CD8-positive, alpha-beta memory T cell (primary cell): ENCODE measurements at regions of chr16 and their contacts with region 1.

Region 1: DNA sequence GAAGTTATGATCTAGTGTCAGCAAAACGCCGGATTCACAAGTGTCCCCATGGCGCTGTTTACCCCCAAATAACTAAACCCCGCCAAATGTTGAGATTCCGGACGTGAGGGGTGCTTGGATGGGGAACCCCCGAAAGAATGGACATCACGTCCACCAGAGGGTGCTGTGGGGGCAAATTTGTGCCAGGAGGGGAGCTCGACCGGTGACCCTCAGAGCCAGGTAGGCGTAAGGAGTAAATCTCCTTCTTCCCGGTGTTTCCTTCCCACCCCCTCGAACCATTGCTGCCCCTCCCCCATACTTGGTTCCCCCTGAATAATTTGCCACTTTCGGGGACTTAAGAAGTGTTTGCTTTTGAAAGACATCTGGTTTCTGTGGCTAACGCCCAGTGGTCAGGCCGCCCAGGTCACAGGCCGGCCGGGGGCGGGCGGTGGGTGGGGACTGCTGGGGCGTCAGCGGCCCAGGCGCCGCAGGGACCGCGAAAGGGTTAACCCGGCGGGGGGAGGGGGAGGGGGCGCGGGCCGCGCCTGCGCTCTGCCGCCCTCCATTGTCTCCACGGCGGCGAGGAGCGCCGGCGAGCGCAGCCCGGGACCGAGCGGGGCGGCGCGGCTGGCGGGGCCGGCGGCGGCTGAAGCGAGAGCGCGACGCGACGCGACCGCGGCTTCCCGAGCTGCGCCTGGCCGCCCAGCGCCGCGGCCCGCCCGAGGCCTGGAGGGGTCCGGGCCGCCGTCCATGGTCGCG is at the start of gene ZNRF1:
- DNase-seq: peak; percentile 66 to 82 (median 71)
- H3K4me3 ChIP-seq: peak within 1 kb of the TSS; percentile 28
- H3K4me3 Mint-ChIP-seq: peak within 1 kb of the TSS; percentile 87 to 94 (median 89)
- H3K27ac ChIP-seq: no peak within 1 kb of the TSS
- H3K27ac Mint-ChIP-seq: peak within 1 kb of the TSS; percentile 59 to 91 (median 85)
- H3K4me1 ChIP-seq: peaks cover 15% of the 10 kb centered on the region
- H3K4me1 Mint-ChIP-seq: peaks cover 14 to 19% (median 17%) of the 10 kb centered on the region in 3 donors
- H3K27me3 ChIP-seq: no peaks in the 10 kb centered on the region
- H3K27me3 Mint-ChIP-seq: peaks cover 6 to 7% of the 10 kb centered on the region in 2 donors
- total RNA-seq, gene ZNRF1: 10.8 to 14.1 TPM

Region 2: GRCh38 chr16:74984535-74985296 is 13.9 kb before region 1 on chr16 and contains the start of gene WDR59:
- CTCF ChIA-PET with region 1: interaction called, 11 read pairs
- POLR2A ChIA-PET with region 1: interaction called, 4 read pairs
- DNase-seq: peak; percentile 98 to 99 (median 98)
- H3K4me3 ChIP-seq: peak within 1 kb of the TSS; percentile 96
- H3K4me3 Mint-ChIP-seq: peak within 1 kb of the TSS; percentile 90 to 99 (median 97)
- H3K27ac ChIP-seq: peak within 1 kb of the TSS; percentile 82
- H3K27ac Mint-ChIP-seq: peak within 1 kb of the TSS; percentile 78 to 97 (median 92)
- H3K4me1 ChIP-seq: peaks cover 8% of the 10 kb centered on the region
- H3K4me1 Mint-ChIP-seq: peaks cover 17 to 28% (median 19%) of the 10 kb centered on the region in 3 donors
- H3K27me3 ChIP-seq: no peaks in the 10 kb centered on the region
- H3K27me3 Mint-ChIP-seq: no peaks in the 10 kb centered on the region
- total RNA-seq, gene WDR59: 55.9 to 56.5 TPM

Region 3: DNA sequence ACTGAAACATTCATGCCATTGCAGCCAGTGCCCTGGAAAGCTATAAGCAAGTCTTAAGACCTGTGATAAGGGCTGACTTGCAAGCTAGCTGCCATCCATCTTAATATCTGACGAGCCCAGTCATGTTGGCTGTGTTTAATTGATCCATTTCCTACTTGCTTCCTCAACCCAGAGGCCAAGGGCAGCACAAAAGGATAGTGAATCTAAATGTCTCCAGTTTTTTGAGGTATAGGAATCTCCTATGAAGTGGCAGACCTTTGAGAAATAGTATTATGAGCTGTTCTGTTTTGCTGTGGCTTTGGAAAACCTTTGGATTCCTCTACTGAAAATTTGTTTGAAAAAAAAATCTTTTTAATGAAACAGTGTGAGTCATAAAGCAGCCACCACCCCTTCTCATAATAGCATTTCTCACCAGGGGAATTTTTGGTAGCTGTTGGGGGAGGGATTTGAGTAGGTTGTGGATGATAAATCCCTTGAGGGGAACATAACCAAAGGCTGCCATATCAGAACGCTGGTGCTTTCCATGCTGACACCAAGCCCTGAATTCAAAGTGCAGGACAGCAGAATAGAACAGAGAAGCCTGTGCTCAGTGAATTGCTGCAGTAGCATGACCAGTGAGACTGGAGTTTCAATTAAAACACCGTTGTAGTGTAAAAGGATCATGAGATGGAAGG is 13.1 kb after region 1 on chr16:
- CTCF ChIA-PET with region 1: interaction called, 11 read pairs
- POLR2A ChIA-PET with region 1: no interaction called
- DNase-seq: no peak
- H3K4me3 ChIP-seq: no peak overlapping the region
- H3K4me3 Mint-ChIP-seq: peak overlapping the region in 3 of 7 donors; percentile 6 to 66 (median 64)
- H3K27ac ChIP-seq: peak overlapping the region; percentile 27
- H3K27ac Mint-ChIP-seq: peak overlapping the region in 6 of 8 donors; percentile 0 to 92 (median 34)
- H3K4me1 ChIP-seq: peaks cover 11% of the 10 kb centered on the region
- H3K4me1 Mint-ChIP-seq: peaks cover 12 to 22% (median 20%) of the 10 kb centered on the region in 3 donors
- H3K27me3 ChIP-seq: no peaks in the 10 kb centered on the region
- H3K27me3 Mint-ChIP-seq: no peaks in the 10 kb centered on the region